ENCODE measurements at regions of chr1 and their contacts with region 1.

Region 1: GRCh38 chr1:28602536-28603439 is 10.7 kb downstream of the RAB42 start:
- DNase-seq: peak; percentile 48 to 89
- H3K4me3 ChIP-seq: no peak overlapping the region
- H3K27ac ChIP-seq: peak overlapping the region in 2 of 5 donors; percentile 41 to 50
- H3K4me1 ChIP-seq: peaks cover 0 to 4% (median 0%) of the 10 kb centered on the region in 4 donors
- H3K27me3 ChIP-seq: no peaks in the 10 kb centered on the region
- CTCF ChIP-seq: peak in 5 of 7 experiments; percentile 36 to 73 (median 60)
- EP300 ChIP-seq: no peak
- POLR2A ChIP-seq: no peak

Region 2: GRCh38 chr1:28322194-28322593 is 280.6 kb before region 1 on chr1:
- intact Hi-C with region 1: no loop called
- DNase-seq: peak in 1 of 2 donors; percentile 77
- H3K4me3 ChIP-seq: no peak overlapping the region
- H3K27ac ChIP-seq: no peak overlapping the region
- H3K4me1 ChIP-seq: peaks cover 0 to 2% (median 0%) of the 10 kb centered on the region in 4 donors
- H3K27me3 ChIP-seq: no peaks in the 10 kb centered on the region
- CTCF ChIP-seq: no peak
- EP300 ChIP-seq: no peak
- POLR2A ChIP-seq: no peak

Region 3: DNA sequence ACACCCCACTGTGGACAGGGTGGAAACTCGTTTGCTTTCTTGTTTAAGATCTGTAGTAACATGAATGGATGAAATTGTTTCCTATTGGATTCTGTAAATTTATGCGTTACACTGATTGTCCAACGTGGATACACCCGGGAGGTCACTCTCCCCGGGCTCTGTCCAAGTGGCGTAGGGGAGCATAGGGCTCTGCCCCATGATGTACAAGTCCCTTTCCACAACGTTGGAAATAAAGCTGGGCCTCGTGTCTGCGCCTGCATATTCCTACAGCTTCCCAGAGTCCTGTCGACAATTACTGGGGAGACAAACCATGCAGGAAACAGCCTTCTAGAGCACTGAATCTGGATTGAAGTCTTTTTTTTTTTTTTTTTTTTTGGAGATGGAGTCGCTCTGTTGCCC is 95.5 kb before region 1 on chr1:
- intact Hi-C with region 1: no loop called
- DNase-seq: no peak
- H3K4me3 ChIP-seq: peak overlapping the region; percentile 72 to 90 (median 76)
- H3K27ac ChIP-seq: peak overlapping the region in 4 of 5 donors; percentile 84 to 93 (median 90)
- H3K4me1 ChIP-seq: peaks cover 32 to 66% (median 50%) of the 10 kb centered on the region in 4 donors
- H3K27me3 ChIP-seq: no peaks in the 10 kb centered on the region
- CTCF ChIP-seq: no peak
- EP300 ChIP-seq: no peak
- POLR2A ChIP-seq: no peak

Region 4: DNA sequence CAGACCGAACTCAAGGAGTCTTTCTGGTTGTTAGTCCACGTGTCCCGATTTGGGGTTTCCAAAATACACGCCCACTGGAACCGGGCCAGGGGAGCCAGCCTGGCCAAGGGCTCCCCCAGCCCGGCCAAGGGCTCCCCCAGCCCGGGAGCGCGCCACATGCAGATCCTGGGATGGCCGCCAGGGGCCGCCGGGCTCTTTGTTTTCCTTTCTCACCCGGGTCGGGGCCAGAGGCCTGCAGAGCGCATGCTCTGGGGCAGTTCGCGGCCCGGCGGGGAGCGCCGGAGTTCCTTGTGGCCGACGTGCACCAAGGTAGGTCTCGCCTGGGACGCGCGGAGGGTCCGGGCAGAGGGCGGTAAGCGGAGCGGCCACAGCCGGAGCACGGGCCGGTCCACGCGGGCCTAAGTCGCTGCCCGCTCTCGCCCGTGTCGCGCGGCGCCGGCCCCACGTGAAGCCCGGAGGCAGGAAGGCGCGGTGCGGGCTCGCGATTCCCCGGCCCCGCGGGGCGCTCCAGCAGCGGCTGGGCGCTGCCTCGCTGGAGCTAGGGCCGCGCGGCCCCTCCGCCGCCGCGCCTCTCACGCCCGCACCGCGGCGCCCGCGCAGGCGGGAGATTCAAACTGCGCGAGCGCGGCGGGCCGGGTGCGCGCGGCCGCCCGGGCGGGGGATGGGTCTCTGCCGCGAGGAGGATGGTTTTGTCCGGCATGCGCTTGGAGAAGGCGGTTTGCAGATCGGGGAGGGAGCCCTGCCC is 84.6 kb before region 1 on chr1:
- intact Hi-C with region 1: loop called (anchors 5 kb)
- DNase-seq: peak; percentile 92 to 96
- H3K4me3 ChIP-seq: peak overlapping the region; percentile 64 to 74 (median 70)
- H3K27ac ChIP-seq: peak overlapping the region; percentile 79 to 97 (median 91)
- H3K4me1 ChIP-seq: peaks cover 12 to 27% (median 19%) of the 10 kb centered on the region in 4 donors
- H3K27me3 ChIP-seq: no peaks in the 10 kb centered on the region
- CTCF ChIP-seq: peak in 6 of 7 experiments; percentile 16 to 100 (median 98)
- EP300 ChIP-seq: no peak
- POLR2A ChIP-seq: no peak